GM13976 (cell line): ENCODE measurements at regions of chr4 and their contacts with region 1.

Region 1: DNA sequence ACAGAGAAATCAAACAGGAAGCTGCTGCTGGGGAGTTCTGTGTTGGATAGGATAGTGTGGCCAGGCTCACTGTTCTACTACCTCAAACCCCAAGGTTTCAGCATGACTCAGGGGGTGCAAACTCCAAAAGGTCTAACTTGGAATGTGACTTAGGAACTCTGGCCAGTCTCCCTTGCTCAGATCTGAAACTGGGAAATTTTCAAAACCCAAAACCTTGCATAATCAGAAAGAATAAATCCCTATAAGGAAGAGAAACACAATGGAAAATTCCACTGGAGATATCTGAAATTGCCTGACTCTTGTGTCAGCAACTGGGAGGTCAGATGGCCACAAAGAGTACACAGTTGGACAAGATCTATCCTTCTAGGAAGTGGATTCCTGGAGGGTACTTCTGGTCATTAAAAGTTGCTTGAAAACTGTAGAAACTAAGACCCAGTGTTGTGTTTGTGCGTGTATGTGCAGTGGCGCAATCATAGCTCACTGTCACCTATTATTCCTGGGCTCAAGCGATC is 58.0 kb downstream of the PPEF2 start:
- DNase-seq: no peak
- CTCF ChIP-seq: no peak

Region 2: DNA sequence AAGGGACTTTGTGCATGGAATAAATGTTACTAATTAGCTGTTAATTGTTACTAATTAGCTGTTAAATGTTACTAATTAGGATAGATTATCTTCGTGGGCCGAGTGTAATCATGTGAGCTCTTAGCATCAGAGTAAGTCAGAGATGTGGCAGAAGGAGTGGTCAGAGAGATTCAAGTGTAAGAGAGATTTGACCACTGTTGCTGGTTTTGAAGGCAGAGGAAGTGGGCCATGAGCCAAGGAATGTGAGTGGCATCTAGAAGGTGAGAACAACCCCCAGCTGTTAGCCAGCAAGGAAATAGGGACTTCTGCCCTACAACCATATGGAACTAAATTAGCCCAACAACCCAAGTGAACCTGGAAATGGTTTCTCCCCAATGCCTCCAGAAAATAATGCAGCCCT is 260.1 kb before region 1 on chr4:
- in situ Hi-C with region 1: loop called (anchors 5 kb)
- DNase-seq: no peak
- CTCF ChIP-seq: no peak

Region 3: DNA sequence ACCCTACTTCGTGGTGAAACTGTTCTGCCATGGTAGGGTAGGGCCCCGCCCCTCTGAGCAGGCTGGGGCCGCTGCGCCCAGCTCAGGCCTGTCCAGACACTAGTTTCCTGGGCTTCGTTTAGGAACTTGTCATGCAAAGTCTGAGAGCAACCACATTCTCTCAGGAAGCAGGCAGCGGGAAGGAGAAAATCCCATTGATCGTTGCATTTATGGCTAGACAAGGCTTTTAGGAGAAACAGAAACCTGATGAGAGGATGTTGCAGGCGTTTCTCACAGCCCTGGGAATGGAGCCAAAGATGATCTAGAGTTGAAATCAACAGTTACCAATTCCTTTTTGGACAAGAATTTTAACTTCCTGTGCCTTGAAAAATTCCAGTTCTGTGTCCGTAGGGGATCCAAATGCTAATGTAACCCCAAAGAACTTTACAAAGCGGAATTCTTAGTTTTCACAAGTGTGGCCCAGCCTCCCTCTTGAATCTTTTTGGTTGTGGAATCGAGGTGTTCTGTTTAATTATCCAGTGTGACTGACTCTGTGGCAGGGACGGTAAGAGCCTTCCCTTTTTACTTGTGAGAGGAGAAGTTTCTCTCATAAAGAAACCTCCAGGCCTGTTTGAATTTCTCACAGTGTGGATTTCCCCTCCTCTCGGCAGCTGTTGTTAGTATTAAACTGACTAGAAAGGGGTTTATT is 167.6 kb after region 1 on chr4:
- in situ Hi-C with region 1: no loop called
- DNase-seq: peak; percentile 76
- CTCF ChIP-seq: no peak